Kidney (tissue), 22 donors: ENCODE measurements at regions of chr4 and their contacts with region 1.

Region 1: GRCh38 chr4:85747882-85748491 is 273.0 kb downstream of the ARHGAP24 start:
- DNase-seq: peak in 4 of 5 donors; percentile 44 to 89 (median 72)
- H3K4me3 ChIP-seq: no peak overlapping the region
- H3K27ac ChIP-seq: no peak overlapping the region
- H3K4me1 ChIP-seq: no peaks in the 10 kb centered on the region
- H3K27me3 ChIP-seq: no peaks in the 10 kb centered on the region
- CTCF ChIP-seq: peak; percentile 83

Region 2: GRCh38 chr4:85147439-85148076 is 600.4 kb before region 1 on chr4:
- intact Hi-C with region 1: loop called (anchors 5 kb)
- DNase-seq: peak; percentile 38 to 86 (median 51)
- H3K4me3 ChIP-seq: peak overlapping the region in 1 of 3 donors; percentile 15
- H3K27ac ChIP-seq: no peak overlapping the region
- H3K4me1 ChIP-seq: no peaks in the 10 kb centered on the region
- H3K27me3 ChIP-seq: no peaks in the 10 kb centered on the region
- CTCF ChIP-seq: peak; percentile 61